ENCODE measurements at regions of chr6 and their contacts with region 1.

Region 1: GRCh38 chr6:30212865-30213666 is at the start of gene TRIM26:
- DNase-seq: peak; percentile 98
- ATAC-seq: peak; percentile 98
- H3K4me3 ChIP-seq: peak within 1 kb of the TSS; percentile 74 to 83
- H3K27ac ChIP-seq: peak within 1 kb of the TSS; percentile 78 to 83
- H3K4me1 ChIP-seq: peaks cover 0 to 6% of the 10 kb centered on the region in 2 donors
- H3K27me3 ChIP-seq: no peaks in the 10 kb centered on the region
- total RNA-seq, gene TRIM26: 35.1 to 36.5 TPM

Region 2: DNA sequence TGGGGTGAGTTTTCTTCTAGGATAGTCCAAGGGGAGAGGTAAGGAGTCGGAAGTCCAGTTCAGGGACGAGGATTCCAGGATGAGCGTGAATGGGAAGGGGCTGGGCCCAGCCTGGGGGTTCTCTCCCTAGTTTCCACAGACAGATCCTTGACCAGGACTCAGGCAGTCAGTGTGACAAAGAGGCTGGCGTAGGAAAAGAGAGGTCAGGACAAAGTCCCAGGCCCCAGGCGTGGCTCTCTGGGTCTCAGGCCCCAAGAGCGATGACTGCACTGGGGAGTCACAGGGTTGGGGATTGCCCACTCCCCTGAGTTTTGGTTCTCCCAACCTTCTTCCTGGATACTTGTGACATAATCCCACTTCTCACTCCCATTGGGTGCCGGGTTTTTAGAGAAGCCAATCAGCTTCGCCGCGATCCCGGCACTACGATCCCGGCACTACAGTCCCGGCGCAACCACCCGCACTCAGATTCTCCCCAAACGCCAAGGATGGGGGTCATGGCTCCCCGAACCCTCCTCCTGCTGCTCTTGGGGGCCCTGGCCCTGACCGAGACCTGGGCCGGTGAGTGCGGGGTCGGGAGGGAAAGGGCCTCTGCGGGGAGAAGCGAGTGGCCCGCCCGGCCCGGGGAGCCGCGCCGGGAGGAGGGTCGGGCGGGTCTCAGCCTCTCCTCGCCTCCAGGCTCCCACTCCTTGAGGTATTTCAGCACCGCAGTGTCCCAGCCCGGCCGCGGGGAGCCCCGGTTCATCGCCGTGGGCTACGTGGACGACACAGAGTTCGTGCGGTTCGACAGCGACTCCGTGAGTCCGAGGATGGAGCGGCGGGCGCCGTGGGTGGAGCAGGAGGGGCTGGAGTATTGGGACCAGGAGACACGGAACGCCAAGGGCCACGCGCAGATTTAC is 46.3 kb after region 1 on chr6:
- intact Hi-C with region 1: loop called in 1 of 2 experiments (anchors 2 kb)
- DNase-seq: peak; percentile 80 to 90
- ATAC-seq: peak; percentile 95
- H3K4me3 ChIP-seq: peak overlapping the region; percentile 29 to 68
- H3K27ac ChIP-seq: peak overlapping the region in 1 of 2 donors; percentile 56
- H3K4me1 ChIP-seq: no peaks in the 10 kb centered on the region
- H3K27me3 ChIP-seq: no peaks in the 10 kb centered on the region

Region 3: DNA sequence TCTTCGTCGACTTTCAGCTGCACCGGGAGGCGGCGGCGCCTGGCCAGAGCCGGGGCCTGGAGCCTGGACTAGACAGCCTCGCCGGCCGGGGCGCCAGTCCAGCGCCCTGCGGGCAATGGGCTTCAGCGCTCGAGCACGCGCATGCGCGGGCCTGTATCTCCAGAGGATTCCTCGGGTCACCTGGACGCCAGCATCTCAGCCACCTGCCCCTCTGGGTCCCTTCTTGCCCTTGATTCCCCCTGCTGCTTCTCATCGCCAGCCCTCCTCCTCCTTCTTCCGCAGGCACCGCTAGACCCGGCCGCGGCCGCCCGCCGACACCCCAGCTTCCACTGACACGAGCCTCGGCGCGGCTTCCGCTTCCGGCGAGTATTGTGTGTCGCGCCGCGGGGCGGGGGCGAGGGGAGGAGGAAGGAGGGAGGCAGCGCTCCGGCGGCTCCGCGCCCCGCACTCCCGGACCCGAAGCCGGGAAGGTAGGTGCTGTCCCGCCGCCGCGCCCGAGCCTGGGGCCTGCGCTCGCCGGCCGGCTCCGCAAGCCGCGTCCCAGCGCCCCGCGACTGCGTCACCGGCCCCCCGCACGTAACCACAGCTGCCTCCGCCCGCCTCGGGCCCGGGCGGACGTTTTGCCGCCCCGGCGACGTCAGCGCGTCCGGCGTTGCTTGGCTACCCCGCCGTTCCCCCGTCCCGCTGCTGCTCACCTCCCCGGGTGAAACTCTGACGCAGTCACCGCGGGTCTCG is 113.6 kb after region 1 on chr6 and contains the start of gene TRIM39:
- intact Hi-C with region 1: loop called (anchors 5 to 10 kb)
- DNase-seq: peak; percentile 94 to 96
- ATAC-seq: peak; percentile 94
- H3K4me3 ChIP-seq: peak within 1 kb of the TSS; percentile 54 to 84
- H3K27ac ChIP-seq: peak within 1 kb of the TSS; percentile 34 to 70
- H3K4me1 ChIP-seq: no peaks in the 10 kb centered on the region
- H3K27me3 ChIP-seq: no peaks in the 10 kb centered on the region
- total RNA-seq, gene TRIM39: 13.8 to 15.5 TPM

Region 4: DNA sequence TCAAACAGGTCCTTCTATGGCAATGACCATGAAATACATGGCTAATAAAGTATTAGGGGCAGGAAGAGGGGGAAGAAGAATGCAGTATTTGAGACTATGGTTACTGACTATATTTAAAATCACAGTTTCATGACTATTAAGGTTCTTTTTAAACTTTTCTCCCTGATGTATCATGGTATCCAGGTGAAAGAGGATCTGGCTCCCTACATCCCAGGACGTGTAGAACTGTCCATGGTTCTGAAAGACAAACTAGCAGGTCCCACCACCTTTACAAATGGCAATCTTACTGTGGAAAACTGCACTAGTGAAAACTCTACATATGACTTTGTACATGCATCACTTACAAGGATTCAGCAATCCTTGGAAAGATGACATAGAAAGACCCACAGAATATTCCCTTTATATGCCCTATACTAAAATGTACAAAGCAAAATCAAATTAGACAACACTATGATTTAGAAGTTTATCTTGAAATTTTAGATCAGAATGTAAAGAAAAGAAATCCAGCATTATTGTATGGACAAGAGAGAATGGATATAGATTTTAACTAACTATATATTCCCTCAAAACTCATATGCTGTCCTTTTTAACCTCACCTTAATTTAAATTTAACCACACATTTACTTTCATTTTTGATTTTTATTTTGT is 165.3 kb after region 1 on chr6:
- intact Hi-C with region 1: no loop called
- DNase-seq: no peak
- ATAC-seq: no peak
- H3K4me3 ChIP-seq: no peak overlapping the region
- H3K27ac ChIP-seq: no peak overlapping the region
- H3K4me1 ChIP-seq: no peaks in the 10 kb centered on the region
- H3K27me3 ChIP-seq: peaks cover 0 to 1% of the 10 kb centered on the region in 2 donors